Activated T-helper 1 cell treated with anti-CD3 and anti-CD28 coated beads, Interleukin-12 subunit alpha, Interleukin-12 subunit beta, Interleukin-2, Interleukin-4 antibody, amounts not matched to agents 30 ng/mL and 10 ng/mL and 1 ng/mL, durations not matched to agents 14 hours and 24 hours and 36 hours (primary cell): ENCODE measurements at regions of chr2 and their contacts with region 1.

Region 1: GRCh38 chr2:218216674-218217359 is at the start of gene ARPC2:
- DNase-seq: peak; percentile 96
- H3K4me3 Mint-ChIP-seq: peak within 1 kb of the TSS; percentile 91
- H3K27ac Mint-ChIP-seq: peak within 1 kb of the TSS; percentile 95
- H3K4me1 Mint-ChIP-seq: peaks cover 36% of the 10 kb centered on the region
- H3K27me3 Mint-ChIP-seq: no peaks in the 10 kb centered on the region
- total RNA-seq, gene ARPC2: 507 and 509 TPM in 2 replicates

Region 2: DNA sequence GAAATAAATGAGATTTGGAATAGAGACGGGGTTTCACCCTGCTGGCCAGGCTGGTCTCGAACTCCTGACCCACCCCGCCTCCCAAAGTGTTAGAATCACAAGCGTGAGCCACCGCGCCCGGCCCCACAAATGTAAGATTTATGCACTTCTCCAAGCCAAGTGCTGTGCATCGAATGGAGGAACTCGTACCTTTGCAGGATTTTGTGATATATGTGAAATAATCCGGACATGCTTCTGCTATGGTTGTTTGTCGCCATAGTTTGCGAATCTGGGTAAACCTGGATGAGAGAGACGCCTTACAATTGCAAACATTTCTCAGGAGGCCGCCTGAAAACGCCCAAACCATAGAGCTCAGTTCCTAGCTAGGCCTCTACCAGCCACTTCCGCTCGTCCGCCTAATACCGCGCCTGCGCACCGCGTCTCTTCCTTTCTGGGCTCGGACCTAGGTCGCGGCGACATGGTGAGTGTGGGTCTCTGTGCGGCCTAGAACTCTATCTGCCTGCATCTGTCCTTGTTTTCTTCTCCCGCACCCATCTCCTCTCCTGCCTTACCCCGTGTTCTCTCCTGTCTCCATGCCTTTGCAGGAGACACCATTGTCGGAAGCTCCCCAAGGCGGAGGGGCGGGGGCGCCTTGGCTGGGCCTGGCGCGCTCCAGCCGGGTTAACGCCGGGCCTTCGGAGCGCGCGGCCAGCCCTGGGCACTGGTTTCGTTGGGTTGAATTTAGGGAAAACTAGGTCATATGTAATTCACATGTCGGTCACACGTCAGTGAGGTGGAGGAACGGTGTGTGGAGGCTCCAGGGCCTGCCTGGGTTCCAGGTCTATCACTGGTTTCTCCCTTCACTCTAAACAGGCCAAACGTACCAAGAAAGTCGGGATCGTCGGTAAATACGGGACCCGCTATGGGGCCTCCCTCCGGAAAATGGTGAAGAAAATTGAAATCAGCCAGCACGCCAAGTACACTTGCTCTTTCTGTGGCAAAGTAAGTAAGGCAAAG is 1718.1 kb before region 1 on chr2 and contains the start of gene RPL37A:
- intact Hi-C with region 1: loop called (anchors 10 kb)
- DNase-seq: peak; percentile 87
- H3K4me3 Mint-ChIP-seq: peak within 1 kb of the TSS; percentile 93
- H3K27ac Mint-ChIP-seq: peak within 1 kb of the TSS; percentile 86
- H3K4me1 Mint-ChIP-seq: peaks cover 57% of the 10 kb centered on the region
- H3K27me3 Mint-ChIP-seq: no peaks in the 10 kb centered on the region
- total RNA-seq, gene RPL37A: 2,803 and 2,922 TPM in 2 replicates

Region 3: DNA sequence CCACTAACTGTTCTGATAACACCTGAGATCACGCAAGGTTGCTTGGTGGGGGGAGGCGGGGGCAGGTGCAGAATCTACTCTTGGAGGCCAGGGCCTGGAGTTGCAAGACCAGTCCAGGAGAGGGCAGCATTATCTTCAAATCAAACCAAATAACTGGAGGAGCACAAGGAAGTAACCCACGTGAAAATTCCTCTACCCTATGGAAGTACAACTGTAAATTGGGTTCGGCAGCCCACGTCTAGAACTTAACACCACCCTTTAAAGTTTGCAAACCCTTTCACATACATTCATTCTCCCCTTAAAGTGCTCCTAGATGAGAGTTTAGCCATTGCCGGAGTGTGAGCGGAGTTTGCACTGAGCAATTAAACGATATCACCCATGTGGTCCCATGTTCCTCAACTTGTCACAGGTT is 30.5 kb before region 1 on chr2:
- intact Hi-C with region 1: loop called (anchors 1 kb)
- DNase-seq: peak; percentile 47
- H3K4me3 Mint-ChIP-seq: no peak overlapping the region
- H3K27ac Mint-ChIP-seq: no peak overlapping the region
- H3K4me1 Mint-ChIP-seq: peaks cover 10% of the 10 kb centered on the region
- H3K27me3 Mint-ChIP-seq: peaks cover 5% of the 10 kb centered on the region

Region 4: DNA sequence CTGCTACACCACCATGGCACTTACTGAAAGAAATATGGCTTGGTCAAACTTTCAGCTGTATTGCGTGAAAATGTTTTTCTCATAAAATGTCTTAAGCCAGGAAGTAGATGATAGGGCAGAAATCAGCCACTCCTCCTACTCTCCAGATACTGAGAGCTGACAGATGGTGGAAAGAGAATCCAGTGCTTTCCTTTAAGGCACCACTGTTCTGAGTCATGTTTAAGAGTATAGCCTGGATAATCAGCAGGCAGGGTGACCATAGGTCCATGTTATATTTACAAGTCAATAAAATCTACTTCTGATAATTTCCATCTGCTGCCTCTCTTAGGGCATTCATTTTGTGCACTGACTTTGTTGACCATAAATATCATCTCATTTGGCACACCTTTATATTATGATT is 22.1 kb after region 1 on chr2:
- intact Hi-C with region 1: no loop called
- DNase-seq: no peak
- H3K4me3 Mint-ChIP-seq: no peak overlapping the region
- H3K27ac Mint-ChIP-seq: peak overlapping the region; percentile 12
- H3K4me1 Mint-ChIP-seq: peaks cover 30% of the 10 kb centered on the region
- H3K27me3 Mint-ChIP-seq: no peaks in the 10 kb centered on the region

Region 5: DNA sequence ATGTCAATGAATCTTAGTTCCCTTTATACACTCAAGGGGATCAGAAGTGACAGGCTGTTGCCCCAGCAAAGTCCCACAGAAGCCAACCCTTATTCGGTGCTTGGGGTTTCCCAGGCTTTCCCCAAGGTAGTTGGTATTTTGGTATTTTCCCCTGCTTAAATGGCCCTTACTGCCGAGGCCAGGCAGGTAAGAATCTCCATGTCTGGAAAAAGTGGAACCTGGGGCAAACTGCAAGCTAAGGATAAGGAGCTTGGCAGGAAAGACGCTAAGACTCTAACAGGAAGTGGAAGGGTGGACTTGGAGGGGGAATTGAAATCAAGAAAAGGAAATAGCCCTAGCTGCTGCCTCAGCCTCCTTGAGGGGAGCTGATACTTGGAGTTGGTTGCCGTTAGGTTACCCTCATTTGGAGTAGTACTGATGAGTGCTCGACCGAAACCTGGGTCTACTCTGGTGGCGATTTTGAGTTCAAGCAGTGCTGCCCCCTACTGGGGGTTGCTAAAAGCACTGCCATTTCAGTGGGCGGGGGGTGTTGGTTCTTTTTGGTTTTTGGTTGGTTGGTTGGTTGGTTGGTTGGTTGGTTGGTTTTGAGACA is 40.7 kb after region 1 on chr2:
- intact Hi-C with region 1: loop called (anchors 2 kb)
- DNase-seq: peak; percentile 46
- H3K4me3 Mint-ChIP-seq: no peak overlapping the region
- H3K27ac Mint-ChIP-seq: peak overlapping the region; percentile 83
- H3K4me1 Mint-ChIP-seq: peaks cover 31% of the 10 kb centered on the region
- H3K27me3 Mint-ChIP-seq: no peaks in the 10 kb centered on the region

Region 6: DNA sequence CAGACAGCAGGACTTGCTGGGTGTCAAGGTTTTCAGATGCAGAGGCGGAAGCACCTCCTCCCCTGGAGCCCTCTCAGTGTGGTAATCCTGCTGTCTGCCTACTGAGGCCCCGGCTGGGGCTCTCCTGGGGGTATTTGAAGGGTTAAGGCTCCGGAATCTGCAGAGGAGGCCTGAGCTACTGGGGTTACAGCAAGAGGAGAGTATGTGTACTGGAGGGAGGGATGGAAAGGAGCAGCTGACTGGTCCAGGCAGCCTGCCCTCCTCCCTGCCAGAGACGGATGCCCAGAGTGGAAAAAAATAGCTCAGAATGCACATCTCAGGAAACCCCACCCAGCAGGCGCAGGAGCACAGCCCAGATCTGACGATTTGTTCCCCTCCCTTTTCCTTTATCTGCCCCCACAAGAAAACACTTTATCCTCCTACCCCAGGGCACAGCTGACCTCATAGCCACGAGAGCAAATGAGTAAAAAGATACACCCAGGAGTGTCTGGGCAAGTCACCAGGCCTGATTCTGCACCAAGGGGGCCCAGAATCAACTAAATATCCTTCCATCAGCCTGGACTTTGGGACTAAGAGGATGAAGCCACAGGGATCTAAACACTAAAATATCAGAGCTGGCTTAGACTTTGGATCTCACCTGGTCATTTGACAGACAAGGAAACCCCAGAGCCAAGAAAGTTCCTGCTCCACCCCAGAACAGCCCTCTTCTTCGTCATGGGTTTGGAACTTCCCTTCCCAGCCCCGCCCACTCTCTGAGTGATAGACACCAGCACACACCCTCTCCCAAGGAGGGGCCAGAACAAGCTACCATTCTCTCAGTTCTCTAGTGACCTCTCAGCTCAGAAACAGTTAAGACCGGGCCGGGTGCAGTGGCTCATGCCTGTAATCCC is 70.0 kb after region 1 on chr2:
- intact Hi-C with region 1: loop called (anchors 1 kb)
- DNase-seq: peak; percentile 82
- H3K4me3 Mint-ChIP-seq: peak overlapping the region; percentile 94
- H3K27ac Mint-ChIP-seq: peak overlapping the region; percentile 99
- H3K4me1 Mint-ChIP-seq: peaks cover 72% of the 10 kb centered on the region
- H3K27me3 Mint-ChIP-seq: no peaks in the 10 kb centered on the region

Region 7: GRCh38 chr2:219495531-219496122 is 1278.8 kb after region 1 on chr2:
- intact Hi-C with region 1: no loop called
- DNase-seq: peak; percentile 31
- H3K4me3 Mint-ChIP-seq: no peak overlapping the region
- H3K27ac Mint-ChIP-seq: no peak overlapping the region
- H3K4me1 Mint-ChIP-seq: peaks cover 26% of the 10 kb centered on the region
- H3K27me3 Mint-ChIP-seq: peaks cover 42% of the 10 kb centered on the region